ENCODE measurements at regions of chr17 and their contacts with region 1.

Region 1: GRCh38 chr17:57849874-57850754 is at the start of gene MRPS23:
- DNase-seq: peak; percentile 98
- ATAC-seq: peak; percentile 98
- total RNA-seq, gene MRPS23: 27.1 TPM

Region 2: GRCh38 chr17:58112970-58113631 is 263.0 kb after region 1 on chr17:
- intact Hi-C with region 1: loop called (anchors 10 kb)
- DNase-seq: peak; percentile 89
- ATAC-seq: peak; percentile 81

Measured in sciatic nerve (tissue), 2 donors.